Activated T-helper 1 cell treated with anti-CD3 and anti-CD28 coated beads, Interleukin-12 subunit alpha, Interleukin-12 subunit beta, Interleukin-2, Interleukin-4 antibody, amounts not matched to agents 30 ng/mL and 10 ng/mL and 1 ng/mL, durations not matched to agents 14 hours and 24 hours and 36 hours (primary cell): ENCODE measurements at regions of chr2 and their contacts with region 1.

Region 1: DNA sequence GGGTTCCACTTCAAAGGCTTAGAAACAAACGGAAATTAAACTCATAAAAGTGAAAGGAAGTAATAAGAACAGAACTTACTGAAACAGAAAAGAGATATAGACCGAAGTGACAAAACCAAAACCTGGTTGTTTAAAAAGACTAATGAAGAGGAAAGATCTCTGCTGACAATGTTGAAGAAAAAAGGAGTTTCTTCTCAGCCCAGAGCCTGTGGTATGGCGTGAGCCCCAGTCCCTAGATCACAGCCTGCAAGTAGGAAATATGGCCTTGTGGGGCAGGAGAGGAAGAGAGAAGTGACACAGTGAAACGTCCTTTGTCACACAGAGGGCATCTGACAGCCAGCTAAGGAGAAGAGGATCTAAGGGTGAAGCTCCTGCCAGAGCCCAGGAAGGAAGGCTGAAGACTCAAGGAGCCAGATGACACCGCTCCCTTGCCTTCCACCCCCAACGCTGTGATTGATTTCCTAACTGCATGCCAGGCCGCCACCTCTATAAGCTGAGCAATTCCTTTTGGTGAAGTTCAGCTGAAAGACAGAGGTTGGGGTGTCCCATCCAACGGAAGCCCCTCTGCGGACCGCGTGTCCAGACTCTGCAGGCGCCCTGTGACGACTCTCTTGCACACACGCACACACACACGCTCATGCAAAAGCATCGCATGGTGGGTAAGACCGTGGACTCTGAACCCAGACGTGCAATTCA is 141.1 kb downstream of the HDAC4 start:
- DNase-seq: no peak
- H3K4me3 Mint-ChIP-seq: peak overlapping the region; percentile 83
- H3K27ac Mint-ChIP-seq: peak overlapping the region; percentile 93
- H3K4me1 Mint-ChIP-seq: peaks cover 83% of the 10 kb centered on the region
- H3K27me3 Mint-ChIP-seq: no peaks in the 10 kb centered on the region

Region 2: DNA sequence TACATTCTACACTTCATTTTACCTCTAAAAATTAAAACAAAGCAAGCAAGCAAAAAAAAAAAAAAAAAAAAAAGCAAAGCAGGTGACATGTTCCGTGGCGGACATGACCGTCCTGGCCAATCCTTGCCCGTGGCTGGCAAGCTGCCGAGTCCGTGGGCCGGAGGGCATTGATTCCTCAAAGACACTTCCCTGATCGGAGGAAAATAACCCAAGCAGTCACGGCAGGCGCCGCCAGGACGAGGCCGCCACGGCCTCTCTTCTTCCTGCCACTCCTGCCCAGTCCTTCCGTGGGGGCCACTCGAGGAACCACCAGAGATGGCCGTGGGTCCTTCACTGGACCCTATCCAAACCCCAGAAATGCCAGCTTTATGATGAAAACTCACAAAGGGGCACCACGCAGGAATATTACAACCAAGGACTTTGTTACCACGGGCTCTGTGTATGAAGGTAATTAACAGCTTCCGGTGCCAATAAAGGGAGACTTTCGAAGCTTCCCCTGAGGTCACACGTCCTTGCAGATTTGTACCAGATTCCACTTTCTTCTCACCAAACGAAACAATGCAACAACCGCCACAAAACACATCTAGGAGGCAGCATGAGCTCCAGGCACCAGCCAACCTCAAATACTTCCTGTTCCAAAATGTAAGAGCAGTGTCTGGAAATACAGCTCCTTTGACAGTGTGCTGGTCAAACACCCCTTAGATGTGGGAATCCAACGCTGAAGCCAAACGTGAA is 29.3 kb before region 1 on chr2:
- intact Hi-C with region 1: loop called (anchors 2 kb)
- DNase-seq: peak; percentile 5
- H3K4me3 Mint-ChIP-seq: peak overlapping the region; percentile 45
- H3K27ac Mint-ChIP-seq: peak overlapping the region; percentile 79
- H3K4me1 Mint-ChIP-seq: peaks cover 48% of the 10 kb centered on the region
- H3K27me3 Mint-ChIP-seq: peaks cover 3% of the 10 kb centered on the region

Region 3: GRCh38 chr2:239245107-239245506 is 14.6 kb before region 1 on chr2:
- intact Hi-C with region 1: no loop called
- DNase-seq: no peak
- H3K4me3 Mint-ChIP-seq: no peak overlapping the region
- H3K27ac Mint-ChIP-seq: no peak overlapping the region
- H3K4me1 Mint-ChIP-seq: peaks cover 51% of the 10 kb centered on the region
- H3K27me3 Mint-ChIP-seq: peaks cover 3% of the 10 kb centered on the region

Region 4: DNA sequence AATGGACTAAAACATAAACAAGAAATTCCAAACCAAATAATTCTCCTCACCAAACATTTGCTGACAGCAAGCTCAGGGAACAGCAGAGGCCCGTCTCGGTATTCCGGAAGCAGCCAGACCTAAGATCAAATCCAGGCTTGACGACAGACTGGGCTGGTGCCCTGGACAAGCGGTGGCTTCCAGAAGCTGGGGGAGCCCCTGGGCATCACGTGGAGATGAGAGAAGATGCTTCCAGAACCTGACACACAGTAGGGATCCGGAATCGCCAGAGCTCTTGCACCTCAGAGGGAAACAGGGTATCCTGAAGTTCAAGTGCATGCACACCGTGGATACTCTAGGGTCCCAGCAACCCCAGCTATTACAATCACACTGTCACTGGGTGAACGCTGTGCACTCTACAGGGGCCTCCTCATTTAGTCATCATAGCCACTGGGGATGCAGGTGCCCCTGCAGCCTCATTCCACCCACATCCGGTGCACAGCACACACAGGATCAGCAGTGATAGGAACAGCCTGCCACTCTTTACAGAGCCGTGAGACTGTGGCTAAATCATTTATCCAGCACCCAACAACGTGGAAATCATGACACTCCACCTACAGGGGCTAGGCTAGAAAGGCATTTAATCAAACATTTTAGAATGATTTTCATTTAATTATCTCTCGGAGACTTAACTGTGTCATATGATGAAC is 38.5 kb after region 1 on chr2:
- intact Hi-C with region 1: loop called (anchors 1 kb)
- DNase-seq: peak; percentile 72
- H3K4me3 Mint-ChIP-seq: peak overlapping the region; percentile 84
- H3K27ac Mint-ChIP-seq: peak overlapping the region; percentile 91
- H3K4me1 Mint-ChIP-seq: peaks cover 71% of the 10 kb centered on the region
- H3K27me3 Mint-ChIP-seq: peaks cover 2% of the 10 kb centered on the region

Region 5: DNA sequence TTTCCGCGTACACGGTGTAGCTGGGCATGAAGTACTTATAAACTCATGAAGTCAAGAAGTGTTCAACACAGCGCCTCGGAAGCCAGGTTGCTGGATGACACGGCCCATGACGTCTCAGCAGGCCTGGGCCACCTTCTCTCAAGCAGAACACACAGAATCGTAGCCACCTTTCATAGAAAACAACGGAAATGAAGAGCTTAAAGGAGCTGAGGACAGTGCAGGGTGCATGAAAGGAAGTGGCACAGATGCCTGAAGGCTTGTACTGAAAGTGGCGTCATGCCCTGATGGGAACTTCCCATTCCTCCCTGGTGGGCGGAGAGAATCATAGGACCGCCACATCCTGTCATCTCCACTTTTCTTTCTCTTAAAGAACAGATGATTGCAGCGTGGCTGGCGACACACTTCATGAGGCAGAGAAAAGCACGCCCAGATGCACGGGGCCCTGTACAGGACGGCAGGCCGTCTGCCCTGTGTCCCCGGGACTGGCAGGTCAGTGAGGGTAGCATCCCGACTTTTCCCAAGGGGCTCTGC is 109.9 kb after region 1 on chr2:
- intact Hi-C with region 1: loop called (anchors 1 kb)
- DNase-seq: peak; percentile 83
- H3K4me3 Mint-ChIP-seq: no peak overlapping the region
- H3K27ac Mint-ChIP-seq: peak overlapping the region; percentile 92
- H3K4me1 Mint-ChIP-seq: peaks cover 26% of the 10 kb centered on the region
- H3K27me3 Mint-ChIP-seq: no peaks in the 10 kb centered on the region